ENCODE measurements at regions of chr10 and their contacts with region 1.

Region 1: DNA sequence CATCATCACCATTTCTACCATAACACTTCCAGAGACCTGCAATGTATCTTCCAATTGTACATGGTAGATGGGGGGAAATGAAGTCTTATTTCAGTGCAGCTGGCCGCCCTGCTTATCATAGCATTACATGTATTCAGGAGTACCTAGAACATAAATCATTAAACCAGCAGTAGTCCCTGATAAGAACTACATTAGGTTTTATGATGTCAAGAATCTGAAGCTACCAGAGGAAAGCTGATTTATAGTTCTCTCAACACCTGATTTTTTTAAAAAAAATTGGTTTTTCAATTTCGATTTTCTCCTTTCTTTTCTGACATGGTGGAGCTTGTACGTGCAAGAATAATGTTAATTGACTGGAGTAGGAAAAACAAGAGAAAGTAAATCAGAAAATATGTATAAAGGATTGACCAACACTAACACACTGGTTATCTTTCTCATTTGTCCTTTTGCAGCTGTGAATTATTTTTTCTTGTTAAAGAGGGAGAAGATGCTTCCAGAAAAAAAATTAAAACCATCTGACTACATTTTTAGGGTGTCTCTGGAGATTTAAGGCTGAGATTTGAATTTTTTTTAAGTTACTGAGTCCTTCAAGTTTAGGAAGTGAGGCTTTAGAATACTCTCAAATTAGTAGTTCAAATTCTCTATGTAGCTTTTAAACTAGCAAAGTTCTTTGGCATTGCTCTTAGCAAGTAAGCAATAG is 59.1 kb downstream of the CSTF2T start:
- DNase-seq: no peak
- H3K4me3 ChIP-seq: no peak overlapping the region
- H3K27ac ChIP-seq: peak overlapping the region in 1 of 59 donors; percentile 11
- H3K27me3 ChIP-seq: no peaks in the 10 kb centered on the region
- CTCF ChIP-seq: no peak

Region 2: GRCh38 chr10:51462076-51462779 is 178.0 kb before region 1 on chr10:
- intact Hi-C with region 1: no loop called
- DNase-seq: no peak
- H3K4me3 ChIP-seq: no peak overlapping the region
- H3K27ac ChIP-seq: no peak overlapping the region
- H3K27me3 ChIP-seq: no peaks in the 10 kb centered on the region
- CTCF ChIP-seq: no peak

Region 3: GRCh38 chr10:51699475-51700227 is 59.4 kb after region 1 on chr10 and contains the start of gene CSTF2T:
- intact Hi-C with region 1: loop called in 1 of 2 experiments (anchors 5 kb)
- DNase-seq: peak; percentile 78 to 91 (median 88)
- H3K4me3 ChIP-seq: peak within 1 kb of the TSS; percentile 65 to 99 (median 87)
- H3K27ac ChIP-seq: peak within 1 kb of the TSS; percentile 84 to 100 (median 99)
- H3K27me3 ChIP-seq: no peaks in the 10 kb centered on the region
- CTCF ChIP-seq: peak in 18 of 56 donors; percentile 7 to 52 (median 18)
- total RNA-seq, gene CSTF2T: 22.9 to 42.7 (median 30.2) TPM

Measured in dorsolateral prefrontal cortex (tissue), 120 donors.